ENCODE measurements at regions of chr13 and their contacts with region 1.

Region 1: GRCh38 chr13:45464687-45465453 is at the start of gene COG3:
- DNase-seq: peak; percentile 96 to 97
- H3K4me3 ChIP-seq: peak within 1 kb of the TSS; percentile 93
- H3K4me3 Mint-ChIP-seq: peak within 1 kb of the TSS; percentile 94
- H3K27ac Mint-ChIP-seq: peak within 1 kb of the TSS; percentile 88
- H3K4me1 ChIP-seq: peaks cover 42% of the 10 kb centered on the region
- H3K4me1 Mint-ChIP-seq: peaks cover 29% of the 10 kb centered on the region
- H3K27me3 ChIP-seq: no peaks in the 10 kb centered on the region
- H3K27me3 Mint-ChIP-seq: no peaks in the 10 kb centered on the region
- CTCF ChIP-seq: peak in 1 of 2 experiments; percentile 68
- total RNA-seq, gene COG3: 31.1 and 35.8 TPM in 2 replicates

Region 2: DNA sequence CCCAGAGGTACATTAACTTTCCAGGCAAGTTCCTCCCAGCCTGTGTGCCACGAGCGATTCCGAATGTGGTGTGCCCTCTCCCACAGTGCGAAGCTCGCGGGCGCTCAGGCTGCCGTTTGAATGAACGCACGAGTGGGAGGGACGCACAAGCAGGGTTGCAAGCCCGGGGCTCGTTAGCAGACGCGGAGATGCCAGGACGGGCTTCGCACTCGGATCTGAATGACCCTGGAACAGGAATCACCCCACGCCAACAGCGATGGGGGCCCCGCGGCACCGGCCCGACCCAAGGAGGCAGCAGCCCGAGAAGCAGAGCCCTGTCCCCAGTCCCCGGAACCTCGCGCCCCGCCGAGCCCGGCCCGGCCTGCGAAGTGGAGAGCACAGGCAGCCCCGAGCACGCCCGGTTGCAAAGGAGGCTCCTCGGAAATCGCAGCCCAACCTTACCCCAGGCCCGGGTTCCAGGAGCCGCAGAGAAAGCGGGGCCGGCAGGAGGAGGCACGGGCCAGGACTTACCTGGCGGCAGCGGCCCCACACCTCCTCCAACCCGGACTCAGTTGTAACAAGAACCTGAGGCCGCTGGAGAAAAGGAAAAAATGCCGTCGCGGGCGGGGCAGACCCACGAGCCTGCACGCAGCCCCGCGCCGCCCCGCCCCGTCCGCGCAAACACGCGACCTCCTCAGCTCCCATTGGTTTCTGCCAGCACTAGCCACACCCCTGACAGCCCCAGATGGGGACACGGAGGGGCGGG is 46.9 kb before region 1 on chr13 and contains the start of gene SLC25A30:
- CTCF ChIA-PET with region 1: no interaction called
- POLR2A ChIA-PET with region 1: interaction called, 8 read pairs
- intact Hi-C with region 1: loop called (anchors 1 kb)
- DNase-seq: peak; percentile 96 to 97
- H3K4me3 ChIP-seq: peak within 1 kb of the TSS; percentile 86
- H3K4me3 Mint-ChIP-seq: peak within 1 kb of the TSS; percentile 88
- H3K27ac Mint-ChIP-seq: peak within 1 kb of the TSS; percentile 29
- H3K4me1 ChIP-seq: peaks cover 17% of the 10 kb centered on the region
- H3K4me1 Mint-ChIP-seq: peaks cover 8% of the 10 kb centered on the region
- H3K27me3 ChIP-seq: no peaks in the 10 kb centered on the region
- H3K27me3 Mint-ChIP-seq: no peaks in the 10 kb centered on the region
- CTCF ChIP-seq: no peak
- total RNA-seq, gene SLC25A30: 12.2 and 16.5 TPM in 2 replicates

Region 3: DNA sequence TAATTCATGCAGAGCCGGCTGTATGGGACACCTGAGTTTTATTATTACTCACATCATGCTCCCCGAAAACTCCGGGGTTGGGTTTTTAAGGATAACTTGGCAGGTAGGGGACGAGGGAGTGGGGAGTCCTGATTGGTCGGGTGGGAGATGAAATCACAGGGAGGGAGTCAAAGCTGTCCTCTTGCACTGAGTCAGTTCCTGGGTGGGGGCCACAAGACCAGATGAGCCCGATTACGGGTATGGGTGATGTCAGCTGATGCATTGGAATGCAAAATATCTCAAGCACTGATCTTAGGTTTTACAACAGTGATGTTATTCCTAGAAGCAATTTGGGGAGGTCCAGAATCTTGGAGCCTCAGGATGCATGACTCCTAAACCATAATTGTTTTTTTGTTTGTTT is 18.7 kb before region 1 on chr13:
- CTCF ChIA-PET with region 1: interaction called, 6 read pairs
- POLR2A ChIA-PET with region 1: interaction called, 4 read pairs
- intact Hi-C with region 1: loop called (anchors 2 kb)
- DNase-seq: no peak
- H3K4me3 ChIP-seq: no peak overlapping the region
- H3K4me3 Mint-ChIP-seq: no peak overlapping the region
- H3K27ac Mint-ChIP-seq: no peak overlapping the region
- H3K4me1 ChIP-seq: peaks cover 26% of the 10 kb centered on the region
- H3K4me1 Mint-ChIP-seq: peaks cover 17% of the 10 kb centered on the region
- H3K27me3 ChIP-seq: no peaks in the 10 kb centered on the region
- H3K27me3 Mint-ChIP-seq: no peaks in the 10 kb centered on the region
- CTCF ChIP-seq: no peak

Measured in Caco-2 (cell line).